ENCODE measurements at regions of chr11 and their contacts with region 1.

Region 1: GRCh38 chr11:34585735-34586487 is 35.0 kb upstream of the EHF start:
- DNase-seq: no peak
- ATAC-seq: no peak
- H3K4me3 Mint-ChIP-seq: no peak overlapping the region
- H3K27ac Mint-ChIP-seq: no peak overlapping the region
- H3K4me1 Mint-ChIP-seq: no peaks in the 10 kb centered on the region
- H3K27me3 Mint-ChIP-seq: peaks cover 42% of the 10 kb centered on the region
- CTCF ChIP-seq: peak; percentile 64

Region 2: DNA sequence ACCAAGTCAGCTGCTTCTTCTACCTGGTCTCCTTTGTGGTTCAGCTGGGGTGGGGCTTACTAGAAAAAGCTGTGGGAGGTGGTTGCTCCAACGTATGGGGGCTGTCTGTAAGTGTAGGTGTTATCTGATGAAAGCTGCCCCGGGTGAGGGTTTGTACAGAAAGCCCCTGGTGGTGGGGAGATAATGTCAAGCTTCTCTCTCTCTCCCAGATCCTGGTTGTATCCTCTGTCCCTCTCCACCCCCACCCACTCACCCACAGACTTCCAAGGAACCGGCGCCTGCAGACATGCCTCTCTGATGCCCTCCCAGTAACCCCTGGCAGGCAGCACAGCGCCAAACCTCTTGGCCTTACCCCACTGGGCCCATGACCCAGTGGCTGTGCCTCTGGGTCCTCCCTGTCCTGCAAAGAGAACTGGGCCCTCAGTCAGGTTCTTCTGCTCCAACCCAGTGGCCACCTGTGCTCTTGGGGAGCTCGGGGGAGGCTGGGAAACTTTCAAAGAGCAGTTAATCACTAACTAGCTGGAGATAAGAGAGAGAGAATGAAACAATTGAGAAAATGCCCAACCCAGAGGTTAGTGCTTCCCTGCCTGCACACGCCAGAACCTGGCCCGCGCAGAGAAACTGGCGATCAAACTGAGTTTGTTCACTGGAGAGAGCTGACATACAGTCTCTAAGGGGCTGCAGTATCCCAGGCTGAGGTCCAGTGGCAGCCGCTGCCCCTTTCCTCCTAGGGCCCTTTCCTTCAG is 14.6 kb after region 1 on chr11:
- CTCF ChIA-PET with region 1: interaction called, 13 read pairs
- POLR2A ChIA-PET with region 1: no interaction called
- intact Hi-C with region 1: no loop called
- DNase-seq: no peak
- ATAC-seq: no peak
- H3K4me3 Mint-ChIP-seq: no peak overlapping the region
- H3K27ac Mint-ChIP-seq: no peak overlapping the region
- H3K4me1 Mint-ChIP-seq: peaks cover 11% of the 10 kb centered on the region
- H3K27me3 Mint-ChIP-seq: peaks cover 18% of the 10 kb centered on the region
- CTCF ChIP-seq: no peak

Region 3: DNA sequence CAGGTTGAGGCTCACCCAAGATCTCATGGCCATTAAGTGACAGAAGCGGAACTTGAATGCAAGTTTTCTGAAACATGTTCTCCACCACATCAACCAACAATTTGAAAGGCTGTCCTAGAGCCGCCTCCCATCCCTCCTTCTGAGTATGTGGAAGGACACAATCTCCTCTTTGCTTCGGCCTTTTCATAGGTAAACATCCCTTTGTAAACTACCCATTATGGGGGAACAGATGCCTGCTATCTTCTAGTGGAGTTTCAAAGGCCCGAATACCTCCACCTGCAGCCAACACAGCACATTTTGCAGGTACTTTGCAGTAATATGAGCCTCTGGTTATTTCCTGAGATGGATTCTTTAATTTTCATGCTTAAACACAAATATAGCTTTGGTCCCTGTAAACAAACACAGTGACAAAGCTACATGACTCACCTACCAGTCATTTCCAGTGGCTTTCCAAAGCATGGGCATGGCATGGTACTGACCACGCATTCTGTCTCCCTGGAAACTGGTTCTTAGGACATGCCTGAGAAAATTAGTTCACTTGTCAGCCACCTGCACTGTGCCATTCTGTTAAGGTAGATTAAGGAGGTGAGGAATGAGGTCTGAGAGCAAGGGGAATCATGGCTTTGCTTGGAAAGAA is 95.1 kb after region 1 on chr11:
- CTCF ChIA-PET with region 1: no interaction called
- POLR2A ChIA-PET with region 1: no interaction called
- intact Hi-C with region 1: no loop called
- DNase-seq: no peak
- ATAC-seq: no peak
- H3K4me3 Mint-ChIP-seq: no peak overlapping the region
- H3K27ac Mint-ChIP-seq: no peak overlapping the region
- H3K4me1 Mint-ChIP-seq: no peaks in the 10 kb centered on the region
- H3K27me3 Mint-ChIP-seq: peaks cover 12% of the 10 kb centered on the region
- CTCF ChIP-seq: no peak

Region 4: GRCh38 chr11:34840736-34841386 is 254.9 kb after region 1 on chr11:
- CTCF ChIA-PET with region 1: interaction called, 15 read pairs
- POLR2A ChIA-PET with region 1: no interaction called
- intact Hi-C with region 1: no loop called
- DNase-seq: peak; percentile 27
- ATAC-seq: peak; percentile 60
- H3K4me3 Mint-ChIP-seq: no peak overlapping the region
- H3K27ac Mint-ChIP-seq: no peak overlapping the region
- H3K4me1 Mint-ChIP-seq: no peaks in the 10 kb centered on the region
- H3K27me3 Mint-ChIP-seq: peaks cover 16% of the 10 kb centered on the region
- CTCF ChIP-seq: peak; percentile 50

Region 5: DNA sequence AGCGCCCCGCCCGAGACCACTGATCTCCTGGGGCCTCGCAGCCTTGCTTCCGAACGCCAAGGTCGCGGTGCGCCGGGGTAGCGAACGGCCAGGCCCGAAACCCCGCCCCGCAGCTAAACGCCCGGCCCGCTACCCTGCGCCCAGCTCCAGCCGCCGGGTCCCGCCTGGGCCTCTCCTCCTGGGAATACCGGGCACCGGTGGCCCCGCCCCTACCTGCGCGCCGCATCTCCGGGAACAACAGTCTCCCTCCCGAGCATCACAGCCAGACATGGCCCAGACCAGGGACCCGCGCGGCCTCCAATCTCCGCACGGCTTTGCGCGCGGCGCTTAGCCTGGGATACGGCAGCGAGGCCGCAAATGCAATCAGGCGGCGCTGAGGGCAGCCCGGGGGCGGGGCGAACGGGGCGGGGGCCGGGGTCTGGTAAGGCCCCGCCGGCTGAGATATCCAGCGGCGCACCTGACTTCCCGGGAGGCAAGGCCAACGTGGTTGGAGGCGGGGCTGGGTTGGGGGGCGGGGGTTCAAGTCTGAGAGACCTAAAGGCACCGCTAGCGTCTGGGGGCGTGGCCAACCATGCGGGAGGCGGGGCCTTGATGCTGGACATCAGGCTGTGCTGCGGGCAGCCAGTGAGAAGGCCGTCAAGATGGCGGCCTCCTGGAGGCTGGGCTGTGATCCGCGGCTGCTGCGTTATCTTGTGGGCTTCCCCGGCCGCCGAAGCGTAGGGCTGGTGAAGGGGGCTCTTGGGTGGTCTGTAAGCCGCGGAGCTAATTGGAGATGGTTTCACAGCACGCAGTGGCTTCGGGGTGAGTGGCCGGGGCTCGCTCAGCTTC is 330.3 kb after region 1 on chr11 and contains the starts of genes APIP and PDHX:
- CTCF ChIA-PET with region 1: interaction called, 10 read pairs
- POLR2A ChIA-PET with region 1: no interaction called
- intact Hi-C with region 1: no loop called
- DNase-seq: peak; percentile 99
- ATAC-seq: peak; percentile 96
- H3K4me3 Mint-ChIP-seq: peak within 1 kb of the TSS; percentile 79
- H3K27ac Mint-ChIP-seq: peak within 1 kb of the TSS; percentile 89
- H3K4me1 Mint-ChIP-seq: peaks cover 37% of the 10 kb centered on the region
- H3K27me3 Mint-ChIP-seq: no peaks in the 10 kb centered on the region
- CTCF ChIP-seq: no peak
- total RNA-seq, gene APIP: 34.4 to 39.0 TPM
- total RNA-seq, gene PDHX: 37.1 to 37.4 TPM

Measured in activated CD8-positive, alpha-beta T cell treated with anti-CD3 and anti-CD28 coated beads for 36 hours (primary cell).